GM12878 (cell line): ENCODE measurements at regions of chr6 and their contacts with region 1.

Region 1: GRCh38 chr6:24774696-24775519 is at the start of gene GMNN:
- DNase-seq: peak; percentile 78
- ATAC-seq: peak; percentile 94
- H3K4me3 ChIP-seq: peak within 1 kb of the TSS; percentile 79
- H3K27ac ChIP-seq: peak within 1 kb of the TSS; percentile 87
- H3K4me1 ChIP-seq: peaks cover 3% of the 10 kb centered on the region; the same call in 1 of the 2 replicates
- H3K27me3 ChIP-seq: no peaks in the 10 kb centered on the region
- CTCF ChIP-seq: no peak
- EP300 ChIP-seq: no peak
- POLR2A ChIP-seq: peak; percentile 96
- RAD21 ChIP-seq: no peak
- polyA plus RNA-seq, gene GMNN: 146 to 153 TPM

Region 2: GRCh38 chr6:24402697-24403501 is 372.0 kb before region 1 on chr6 and contains the start of gene MRS2:
- CTCF ChIA-PET with region 1: interaction called, 3 read pairs
- POLR2A ChIA-PET with region 1: no interaction called
- RAD21 ChIA-PET with region 1: no interaction called
- SMC1A ChIA-PET with region 1: no interaction called
- in situ Hi-C with region 1: no loop called
- intact Hi-C with region 1: loop called (anchors 10 kb)
- DNase-seq: peak; percentile 71
- ATAC-seq: peak; percentile 96
- H3K4me3 ChIP-seq: peak within 1 kb of the TSS; percentile 85
- H3K27ac ChIP-seq: peak within 1 kb of the TSS; percentile 49; the same call in 1 of the 2 replicates
- H3K4me1 ChIP-seq: peaks cover 3% of the 10 kb centered on the region; the same call in 1 of the 2 replicates
- H3K27me3 ChIP-seq: no peaks in the 10 kb centered on the region
- CTCF ChIP-seq: no peak
- EP300 ChIP-seq: no peak
- POLR2A ChIP-seq: peak; percentile 91
- RAD21 ChIP-seq: no peak
- polyA plus RNA-seq, gene MRS2: 7.5 to 12.6 TPM

Region 3: DNA sequence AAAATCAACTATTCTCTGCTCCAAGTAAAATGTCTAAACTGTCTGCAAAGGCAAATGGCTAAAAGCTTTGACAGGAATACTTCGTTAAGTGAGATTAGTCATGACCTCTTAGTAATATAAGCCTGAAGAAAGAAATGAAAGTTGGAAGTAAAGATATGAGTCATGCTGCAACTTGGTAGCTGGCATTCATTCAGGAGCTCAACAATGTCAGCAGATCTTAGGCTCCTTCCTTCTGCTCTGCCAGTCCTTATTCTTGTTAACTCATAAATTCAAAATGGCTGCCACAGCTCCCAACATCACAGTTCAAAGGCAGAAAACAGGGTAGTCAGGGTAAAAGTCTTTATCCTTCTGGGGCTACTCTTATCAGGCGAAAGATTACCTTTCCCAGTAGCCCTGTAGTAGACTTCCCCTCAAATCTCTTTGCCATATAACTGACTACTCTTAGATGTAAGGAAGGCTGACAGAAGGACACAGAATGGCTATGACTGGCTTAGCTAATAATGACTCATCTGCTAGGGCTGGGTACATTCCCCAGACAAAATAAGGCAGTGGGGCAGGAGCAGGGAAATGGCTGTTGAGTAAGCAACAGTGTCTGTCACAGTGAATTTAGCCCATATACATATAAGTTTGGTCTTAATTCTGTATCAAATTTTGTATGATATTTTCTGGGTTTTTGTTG is 31.5 kb before region 1 on chr6:
- CTCF ChIA-PET with region 1: interaction called, 3 read pairs
- POLR2A ChIA-PET with region 1: interaction called, 5 read pairs
- RAD21 ChIA-PET with region 1: interaction called, 3 read pairs
- SMC1A ChIA-PET with region 1: interaction called, 5 read pairs
- in situ Hi-C with region 1: no loop called
- intact Hi-C with region 1: loop called (anchors 2 kb)
- DNase-seq: peak; percentile 81
- ATAC-seq: peak; percentile 95
- H3K4me3 ChIP-seq: peak overlapping the region; percentile 16; the same call in 1 of the 2 replicates
- H3K27ac ChIP-seq: peak overlapping the region; percentile 71
- H3K4me1 ChIP-seq: peaks cover 17% of the 10 kb centered on the region
- H3K27me3 ChIP-seq: no peaks in the 10 kb centered on the region
- CTCF ChIP-seq: no peak
- EP300 ChIP-seq: peak in 1 of 2 experiments; percentile 53; a peak in 1 of 4 replicates
- POLR2A ChIP-seq: no peak
- RAD21 ChIP-seq: no peak

Region 4: DNA sequence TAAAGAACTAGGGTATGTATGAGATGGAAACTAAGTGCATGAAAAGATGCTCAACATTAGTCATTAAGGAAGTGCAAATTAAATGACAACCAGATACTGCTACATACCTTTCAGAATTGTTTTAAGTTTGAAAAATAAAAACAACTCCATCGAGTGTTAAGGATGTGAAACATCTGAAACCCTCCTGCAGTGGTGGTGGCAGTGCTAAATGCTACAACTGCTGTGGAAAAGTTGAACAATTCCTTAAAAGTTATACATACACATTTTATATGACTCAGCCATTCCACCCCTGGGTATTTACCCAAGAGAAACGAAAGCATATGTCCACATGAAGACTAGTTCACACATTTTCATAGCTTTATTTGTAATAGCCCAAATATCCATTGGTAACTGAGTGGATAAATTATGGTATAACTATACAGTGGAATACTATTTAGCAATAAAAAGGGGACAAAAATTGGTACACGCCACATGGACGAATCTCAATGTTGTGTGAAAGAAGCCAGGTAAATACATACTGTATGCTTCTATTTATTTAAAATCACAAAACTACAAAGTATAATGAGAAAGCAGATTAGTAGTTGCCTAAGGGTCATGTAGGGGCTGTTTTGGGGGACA is 13.2 kb after region 1 on chr6:
- CTCF ChIA-PET with region 1: no interaction called
- POLR2A ChIA-PET with region 1: interaction called, 5 read pairs
- RAD21 ChIA-PET with region 1: no interaction called
- SMC1A ChIA-PET with region 1: interaction called, 19 read pairs
- in situ Hi-C with region 1: no loop called
- intact Hi-C with region 1: no loop called
- DNase-seq: no peak
- ATAC-seq: no peak; the same call in 2 of the 3 replicates
- H3K4me3 ChIP-seq: no peak overlapping the region
- H3K27ac ChIP-seq: no peak overlapping the region
- H3K4me1 ChIP-seq: no peaks in the 10 kb centered on the region
- H3K27me3 ChIP-seq: no peaks in the 10 kb centered on the region
- CTCF ChIP-seq: no peak
- EP300 ChIP-seq: no peak
- POLR2A ChIP-seq: no peak
- RAD21 ChIP-seq: no peak

Region 5: DNA sequence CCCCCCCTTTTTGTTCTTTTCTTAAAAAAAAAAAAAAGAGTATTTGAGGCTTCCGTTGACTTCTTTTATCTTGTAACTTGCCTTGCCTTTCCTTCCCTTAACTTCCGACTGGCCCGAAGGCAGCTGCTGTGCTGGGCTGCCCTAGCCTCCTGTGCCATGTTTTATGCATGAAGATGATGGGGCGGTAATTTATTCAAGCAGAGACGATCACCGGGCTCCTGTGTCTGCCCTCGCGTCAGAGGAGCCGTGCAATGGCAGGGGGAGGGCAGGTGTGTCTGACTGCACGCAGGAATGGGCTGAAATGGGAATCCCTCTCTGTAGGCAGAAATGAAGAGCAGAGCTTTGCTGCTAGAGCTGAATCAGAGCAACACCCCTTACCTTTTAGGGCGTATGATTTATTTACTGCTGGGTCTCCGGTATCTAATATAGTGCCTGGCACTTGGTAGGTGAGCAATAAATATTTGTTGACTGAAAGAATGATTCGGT is 267.2 kb after region 1 on chr6:
- CTCF ChIA-PET with region 1: no interaction called
- POLR2A ChIA-PET with region 1: interaction called, 11 read pairs
- RAD21 ChIA-PET with region 1: interaction called, 6 read pairs
- SMC1A ChIA-PET with region 1: interaction called, 8 read pairs
- in situ Hi-C with region 1: no loop called
- intact Hi-C with region 1: no loop called
- DNase-seq: no peak
- ATAC-seq: peak; percentile 62
- H3K4me3 ChIP-seq: peak overlapping the region; percentile 67
- H3K27ac ChIP-seq: peak overlapping the region; percentile 60
- H3K4me1 ChIP-seq: peaks cover 23% of the 10 kb centered on the region
- H3K27me3 ChIP-seq: no peaks in the 10 kb centered on the region
- CTCF ChIP-seq: no peak
- EP300 ChIP-seq: no peak
- POLR2A ChIP-seq: peak; percentile 50; the same call in 1 of the 2 replicates
- RAD21 ChIP-seq: no peak